ENCODE measurements at regions of chr1 and their contacts with region 1.

Region 1: DNA sequence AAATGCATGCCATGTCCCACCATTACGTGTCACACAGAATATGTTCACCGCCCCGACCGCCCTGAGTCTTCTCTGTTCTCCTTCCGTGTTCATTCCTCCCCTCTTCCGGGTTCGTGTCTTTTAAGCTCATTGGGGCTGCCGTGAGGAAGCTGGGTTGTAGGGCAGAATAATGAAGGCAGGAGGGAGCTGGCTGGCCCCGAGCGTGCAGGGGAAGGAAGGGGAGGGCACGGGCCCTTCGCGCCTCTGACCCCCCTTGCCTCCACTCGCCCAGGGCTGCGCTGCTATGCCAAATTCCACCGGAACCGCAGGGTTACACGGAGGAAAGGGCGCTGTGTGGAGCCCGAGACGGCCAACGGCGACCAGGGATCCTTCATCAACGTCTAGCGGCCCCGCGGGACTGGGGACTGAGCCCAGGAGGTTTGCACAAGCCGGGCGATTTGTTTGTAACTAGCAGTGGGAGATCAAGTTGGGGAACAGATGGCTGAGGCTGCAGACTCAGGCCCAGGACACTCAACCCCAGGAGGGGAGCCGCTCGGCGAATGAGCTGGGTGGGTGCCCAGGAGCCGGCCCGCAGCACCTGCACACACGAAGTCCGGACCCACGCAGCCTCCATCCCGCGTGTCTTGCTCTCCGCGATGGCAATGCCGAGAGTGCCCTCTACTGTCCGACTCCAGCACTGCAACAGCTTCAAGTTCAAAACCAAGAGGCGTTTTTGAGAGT is 16.5 kb upstream of the AGTRAP start:
- DNase-seq: peak; percentile 78 to 90 (median 88)
- H3K4me3 ChIP-seq: peak overlapping the region; percentile 10
- H3K27ac ChIP-seq: no peak overlapping the region
- H3K4me1 ChIP-seq: no peaks in the 10 kb centered on the region
- H3K27me3 ChIP-seq: no peaks in the 10 kb centered on the region
- CTCF ChIP-seq: peak; percentile 78 to 88 (median 86)
- EP300 ChIP-seq: no peak
- POLR2A ChIP-seq: no peak

Region 2: DNA sequence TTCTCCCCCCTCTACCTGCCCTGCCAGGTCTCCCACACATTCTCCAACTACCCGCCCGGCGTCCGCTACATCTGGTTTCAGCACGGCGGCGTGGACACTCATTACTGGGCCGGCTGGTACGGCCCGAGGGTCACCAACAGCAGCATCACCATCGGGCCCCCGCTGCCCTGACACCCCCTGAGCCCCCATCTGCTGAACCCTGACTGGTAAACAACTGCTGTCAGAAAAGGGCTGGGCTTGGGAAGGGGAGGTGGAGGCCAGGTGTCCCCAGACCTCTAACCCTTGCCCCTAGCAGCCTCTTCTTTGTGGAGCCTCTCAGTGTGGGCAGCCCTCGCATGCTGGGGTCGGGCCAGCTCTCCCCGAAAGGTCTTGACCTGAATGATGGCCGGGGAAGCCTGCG is 58.4 kb before region 1 on chr1:
- intact Hi-C with region 1: loop called in 3 of 4 experiments (anchors 5 to 10 kb)
- DNase-seq: no peak
- H3K4me3 ChIP-seq: no peak overlapping the region
- H3K27ac ChIP-seq: no peak overlapping the region
- H3K4me1 ChIP-seq: no peaks in the 10 kb centered on the region
- H3K27me3 ChIP-seq: no peaks in the 10 kb centered on the region
- CTCF ChIP-seq: no peak
- EP300 ChIP-seq: no peak
- POLR2A ChIP-seq: no peak

Region 3: GRCh38 chr1:11681071-11681771 is 38.3 kb before region 1 on chr1 and contains the start of gene MAD2L2:
- intact Hi-C with region 1: loop called in 1 of 4 experiments (anchors 5 kb)
- DNase-seq: peak; percentile 85 to 92 (median 90)
- H3K4me3 ChIP-seq: peak within 1 kb of the TSS; percentile 66
- H3K27ac ChIP-seq: peak within 1 kb of the TSS; percentile 67 to 69
- H3K4me1 ChIP-seq: peaks cover 4% of the 10 kb centered on the region
- H3K27me3 ChIP-seq: no peaks in the 10 kb centered on the region
- CTCF ChIP-seq: no peak
- EP300 ChIP-seq: peak; percentile 47
- POLR2A ChIP-seq: peak; percentile 76
- total RNA-seq, gene MAD2L2: 21.1 to 35.9 (median 27.8) TPM